Sigmoid colon (tissue), 7 donors: ENCODE measurements at regions of chr7 and their contacts with region 1.

Region 1: DNA sequence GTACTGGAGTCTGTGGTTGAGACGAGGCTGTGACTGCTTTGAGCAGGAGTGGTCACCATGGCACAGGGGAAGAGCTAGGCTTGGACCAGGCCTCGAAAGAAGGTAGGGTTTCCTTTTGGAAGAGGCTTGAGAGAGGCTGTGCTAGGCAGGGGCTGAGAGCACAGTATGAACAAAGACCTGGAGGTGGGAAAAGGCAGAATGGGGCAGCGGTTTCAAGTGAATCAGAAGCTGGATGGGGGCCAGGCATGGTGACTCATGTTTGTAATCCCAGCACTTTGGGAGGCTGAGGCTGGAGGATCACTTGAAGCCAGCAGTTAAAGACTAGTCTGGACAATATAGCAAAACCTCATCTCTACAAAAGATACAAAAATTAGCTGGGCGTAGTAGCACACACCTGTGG is 65.9 kb downstream of the CLIP2 start:
- DNase-seq: no peak
- H3K4me3 ChIP-seq: no peak overlapping the region
- H3K27ac ChIP-seq: no peak overlapping the region
- H3K4me1 ChIP-seq: peaks cover 0 to 5% (median 0%) of the 10 kb centered on the region in 4 donors
- H3K27me3 ChIP-seq: no peaks in the 10 kb centered on the region
- CTCF ChIP-seq: no peak
- EP300 ChIP-seq: no peak
- POLR2A ChIP-seq: no peak

Region 2: GRCh38 chr7:74306730-74307469 is 48.2 kb before region 1 on chr7:
- intact Hi-C with region 1: loop called (anchors 5 kb)
- DNase-seq: peak; percentile 82
- H3K4me3 ChIP-seq: peak overlapping the region in 3 of 4 donors; percentile 8 to 30 (median 27)
- H3K27ac ChIP-seq: peak overlapping the region in 3 of 4 donors; percentile 1 to 73 (median 47)
- H3K4me1 ChIP-seq: peaks cover 0 to 42% (median 22%) of the 10 kb centered on the region in 4 donors
- H3K27me3 ChIP-seq: no peaks in the 10 kb centered on the region
- CTCF ChIP-seq: no peak
- EP300 ChIP-seq: peak in 1 of 4 donors; percentile 16
- POLR2A ChIP-seq: no peak

Region 3: DNA sequence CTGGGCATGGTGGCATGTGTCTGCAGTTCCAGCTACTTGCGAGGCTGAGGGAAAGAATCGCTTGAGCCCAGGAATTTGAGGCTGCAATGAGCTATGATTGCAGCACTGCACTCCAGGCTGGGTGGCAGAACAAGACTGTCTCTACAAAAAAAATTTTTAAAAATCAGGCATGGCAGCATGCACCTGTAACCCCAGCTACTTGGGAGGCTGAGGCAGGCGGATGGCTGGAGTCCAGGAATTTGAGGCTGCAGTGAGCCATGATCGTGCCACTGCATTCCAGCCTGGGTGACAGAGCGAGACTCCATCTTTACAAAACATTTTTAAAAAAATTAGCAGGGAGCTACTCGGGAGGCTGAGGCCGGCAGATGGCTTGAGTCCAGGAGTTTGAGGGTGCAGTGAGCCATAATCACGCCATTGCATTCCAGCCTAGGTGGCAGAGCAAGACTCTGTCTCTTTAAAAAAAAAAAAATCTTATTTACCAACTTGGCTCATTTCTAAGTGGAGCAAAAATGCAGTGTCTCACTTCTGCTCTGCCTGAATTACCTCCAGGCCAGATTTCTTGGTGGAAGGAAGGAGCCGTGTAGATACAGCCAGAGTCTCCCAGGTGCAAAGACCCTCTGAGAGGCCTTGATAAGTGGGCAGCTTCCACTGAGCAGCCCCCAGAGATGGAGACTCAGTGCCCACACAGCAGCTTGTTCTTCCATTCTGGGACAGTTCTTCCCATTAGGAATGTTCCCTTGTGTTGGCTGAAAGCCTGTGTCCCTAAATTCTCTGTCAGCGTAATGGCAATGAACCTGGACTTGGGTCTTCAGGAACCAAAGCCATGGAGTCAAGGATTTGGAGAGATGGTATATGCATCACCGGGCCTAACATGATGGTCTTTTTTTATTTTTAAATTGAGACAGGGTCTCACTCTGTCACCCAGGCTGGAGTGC is 128.6 kb after region 1 on chr7:
- intact Hi-C with region 1: no loop called
- DNase-seq: no peak
- H3K4me3 ChIP-seq: no peak overlapping the region
- H3K27ac ChIP-seq: peak overlapping the region; percentile 87 to 95 (median 94)
- H3K4me1 ChIP-seq: peaks cover 0 to 57% (median 52%) of the 10 kb centered on the region in 4 donors
- H3K27me3 ChIP-seq: no peaks in the 10 kb centered on the region
- CTCF ChIP-seq: no peak
- EP300 ChIP-seq: no peak
- POLR2A ChIP-seq: no peak